ENCODE measurements at regions of chr17 and their contacts with region 1.

Region 1: DNA sequence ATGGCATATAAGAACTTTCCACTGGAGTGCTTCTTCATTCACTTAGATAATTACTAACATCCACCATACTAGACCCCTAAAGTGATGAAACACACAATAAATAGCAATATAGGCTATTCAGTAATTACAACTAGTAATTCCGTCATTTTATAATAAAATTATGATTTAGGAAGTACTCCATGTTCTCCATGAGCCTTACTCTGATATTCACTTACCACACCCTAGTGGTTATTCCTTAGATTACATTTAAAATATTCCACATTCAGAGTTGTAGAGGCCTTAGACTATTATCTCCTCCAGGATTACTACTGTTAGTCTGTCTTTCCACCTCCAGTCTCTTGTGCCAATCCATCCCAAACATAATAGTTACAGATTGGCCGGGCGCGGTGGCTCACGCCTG is 62.4 kb downstream of the STH start:
- DNase-seq: peak; percentile 17
- H3K4me3 ChIP-seq: no peak overlapping the region
- H3K27ac ChIP-seq: no peak overlapping the region
- H3K4me1 ChIP-seq: peaks cover 15% of the 10 kb centered on the region
- H3K27me3 ChIP-seq: no peaks in the 10 kb centered on the region
- CTCF ChIP-seq: peak; percentile 18 to 37

Region 2: DNA sequence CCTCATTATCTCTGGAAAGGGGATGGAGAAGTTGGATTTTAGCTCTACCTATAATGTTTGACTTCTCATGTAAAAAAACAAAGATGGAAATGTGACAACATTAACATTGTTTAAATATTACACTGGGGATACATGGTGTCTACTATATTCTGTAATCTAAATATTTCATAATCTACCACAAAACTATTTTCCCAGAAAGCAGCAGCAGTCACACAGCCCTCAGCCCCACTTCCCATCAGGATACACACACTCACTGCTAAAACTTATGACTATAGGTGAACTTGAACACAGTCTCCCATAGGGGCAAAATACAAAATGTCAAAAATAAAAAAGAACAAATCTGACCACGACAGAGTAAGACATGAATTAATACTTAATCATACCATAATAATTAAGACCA is 36.1 kb after region 1 on chr17:
- CTCF ChIA-PET with region 1: no interaction called
- dilution Hi-C with region 1: no loop called
- in situ Hi-C with region 1: no loop called
- intact Hi-C with region 1: no loop called
- DNase-seq: no peak
- H3K4me3 ChIP-seq: no peak overlapping the region
- H3K27ac ChIP-seq: no peak overlapping the region
- H3K4me1 ChIP-seq: peaks cover 5% of the 10 kb centered on the region
- H3K27me3 ChIP-seq: no peaks in the 10 kb centered on the region
- CTCF ChIP-seq: no peak

Region 3: DNA sequence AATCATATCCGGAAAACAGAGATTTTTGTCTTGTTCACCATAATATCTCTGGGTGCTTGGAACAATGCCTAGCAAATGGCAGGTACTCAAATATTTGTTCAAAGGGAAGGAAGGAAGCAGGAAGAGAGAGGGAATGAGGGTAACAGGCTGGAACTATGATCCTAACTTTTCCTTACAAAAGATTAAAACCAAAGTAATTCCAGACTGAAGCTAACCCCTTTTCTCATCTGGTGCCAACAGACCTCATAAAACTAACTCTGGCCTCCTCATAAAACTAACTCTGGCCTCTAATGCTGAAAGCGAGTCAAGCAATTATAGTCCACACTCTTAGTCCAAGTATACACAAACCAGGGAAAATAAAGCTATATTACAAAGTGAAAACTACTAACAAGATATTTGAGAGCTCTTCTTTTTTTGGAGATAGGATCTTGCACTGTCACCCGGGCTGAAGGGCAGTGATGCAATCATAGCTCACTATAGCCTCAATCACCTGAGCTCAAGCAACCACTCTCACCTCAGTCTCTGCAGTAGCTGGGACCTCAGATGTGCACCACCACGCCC is 47.2 kb after region 1 on chr17:
- CTCF ChIA-PET with region 1: no interaction called
- dilution Hi-C with region 1: no loop called
- in situ Hi-C with region 1: no loop called
- intact Hi-C with region 1: no loop called
- DNase-seq: no peak
- H3K4me3 ChIP-seq: no peak overlapping the region
- H3K27ac ChIP-seq: no peak overlapping the region
- H3K4me1 ChIP-seq: peaks cover 11% of the 10 kb centered on the region
- H3K27me3 ChIP-seq: no peaks in the 10 kb centered on the region
- CTCF ChIP-seq: no peak

Region 4: GRCh38 chr17:46179375-46179999 is 118.1 kb after region 1 on chr17:
- CTCF ChIA-PET with region 1: no interaction called
- dilution Hi-C with region 1: no loop called
- in situ Hi-C with region 1: no loop called
- intact Hi-C with region 1: loop called (anchors 5 kb)
- DNase-seq: no peak
- H3K4me3 ChIP-seq: no peak overlapping the region
- H3K27ac ChIP-seq: no peak overlapping the region
- H3K4me1 ChIP-seq: peaks cover 17% of the 10 kb centered on the region
- H3K27me3 ChIP-seq: no peaks in the 10 kb centered on the region
- CTCF ChIP-seq: no peak